Left cardiac atrium (tissue), 4 donors: ENCODE measurements at regions of chr9 and their contacts with region 1.

Region 1: DNA sequence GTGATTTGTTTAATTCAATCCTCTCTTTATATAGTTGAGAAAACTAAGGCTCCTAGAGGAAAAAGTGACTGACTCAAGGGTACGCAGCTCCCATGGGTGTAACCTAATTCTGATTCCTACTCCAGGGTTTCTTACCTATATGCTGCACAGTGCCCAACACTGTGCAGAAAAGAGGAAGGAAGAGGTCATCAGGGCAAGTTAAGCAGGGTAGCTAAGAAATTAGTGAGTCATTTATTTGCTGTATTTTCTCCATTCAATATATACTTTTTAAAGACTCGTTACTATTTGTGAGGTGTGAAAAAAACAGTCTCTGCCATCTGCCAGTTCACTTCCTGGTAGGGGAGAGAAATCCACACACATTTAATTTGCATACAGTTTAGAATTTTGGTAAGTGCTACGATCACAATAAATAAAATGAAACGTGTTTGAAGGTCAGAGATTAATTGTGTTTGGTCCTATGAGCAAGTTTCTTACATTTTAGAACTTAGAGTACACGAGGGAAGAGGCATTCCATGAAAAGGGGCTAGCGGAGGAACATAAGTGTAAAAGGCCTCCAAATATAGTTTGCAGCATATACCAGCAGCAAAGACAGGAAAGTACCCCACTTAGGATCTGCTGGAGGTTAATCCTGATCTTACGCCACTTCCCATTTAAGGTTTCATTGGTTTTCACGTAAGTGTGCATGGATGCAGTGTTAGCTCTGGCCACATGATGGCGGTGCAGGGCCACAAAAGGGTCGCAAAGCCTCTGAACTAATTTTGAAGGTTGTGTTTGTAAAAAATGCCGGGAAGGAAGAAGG is 59.9 kb upstream of the TLR4 start:
- DNase-seq: peak; percentile 72
- ATAC-seq: peak; percentile 81 to 82

Region 2: GRCh38 chr9:117377046-117377634 is 267.2 kb before region 1 on chr9:
- intact Hi-C with region 1: no loop called
- DNase-seq: no peak
- ATAC-seq: no peak

Region 3: DNA sequence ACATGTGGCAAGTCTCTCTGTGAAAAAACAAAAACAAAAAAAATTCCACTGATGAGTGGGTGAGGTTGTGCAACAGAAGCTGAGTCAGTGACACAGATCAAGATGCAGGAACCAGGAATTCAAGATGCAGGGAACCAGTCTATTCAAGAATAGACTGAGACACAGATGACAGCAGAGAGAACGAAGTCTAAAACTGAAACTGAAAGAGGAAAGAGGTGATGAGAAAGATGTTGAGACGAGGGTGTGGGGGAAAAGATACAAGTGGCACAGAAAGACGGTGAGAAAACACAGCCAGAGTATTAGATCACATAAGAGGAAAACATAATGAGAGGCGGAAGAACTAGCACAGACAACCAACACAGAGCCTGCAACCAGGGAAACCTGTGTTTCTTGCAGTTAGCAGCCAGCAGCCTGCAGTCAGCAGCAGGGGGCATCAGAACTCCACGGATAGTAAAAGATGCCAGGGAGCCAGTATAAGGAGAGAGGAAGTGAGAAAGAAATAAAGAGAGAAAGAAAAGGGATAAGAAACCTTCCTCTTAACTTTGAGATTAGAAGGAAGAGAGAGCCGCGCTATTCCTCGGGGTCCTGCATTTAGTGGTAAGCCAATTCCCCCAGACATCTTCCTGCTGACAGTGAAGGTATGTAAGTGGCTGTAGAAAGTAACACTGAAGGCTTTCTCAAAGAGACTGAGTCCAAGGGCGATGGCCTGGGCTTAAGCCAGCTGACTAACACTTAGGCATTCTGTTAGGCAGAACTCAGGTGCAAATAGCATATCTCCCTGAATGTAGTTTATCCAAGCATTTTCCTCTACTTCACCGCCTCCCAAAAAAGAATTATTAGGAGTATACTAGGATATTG is 138.8 kb after region 1 on chr9:
- intact Hi-C with region 1: loop called (anchors 5 kb)
- DNase-seq: peak; percentile 76
- ATAC-seq: peak; percentile 87 to 97